ENCODE measurements at regions of chr12 and their contacts with region 1.

Region 1: GRCh38 chr12:51521554-51522276 is 69.3 kb upstream of the SCN8A start:
- DNase-seq: no peak
- H3K4me3 ChIP-seq: no peak overlapping the region
- H3K27ac ChIP-seq: no peak overlapping the region
- H3K4me1 ChIP-seq: peaks cover 0 to 26% of the 10 kb centered on the region in 2 experiments; a peak in 2 of 4 replicates
- H3K27me3 ChIP-seq: no peaks in the 10 kb centered on the region
- CTCF ChIP-seq: peak; percentile 36; the same call in 1 of the 2 replicates
- EP300 ChIP-seq: no peak
- RAD21 ChIP-seq: no peak

Region 2: GRCh38 chr12:51381226-51382079 is 140.3 kb before region 1 on chr12:
- CTCF ChIA-PET with region 1: no interaction called
- POLR2A ChIA-PET with region 1: no interaction called
- DNase-seq: no peak
- H3K4me3 ChIP-seq: no peak overlapping the region
- H3K27ac ChIP-seq: no peak overlapping the region; a peak in 1 of 4 replicates
- H3K4me1 ChIP-seq: peaks cover 0 to 21% of the 10 kb centered on the region in 2 experiments; a peak in 2 of 4 replicates
- H3K27me3 ChIP-seq: no peaks in the 10 kb centered on the region
- CTCF ChIP-seq: no peak
- EP300 ChIP-seq: no peak
- RAD21 ChIP-seq: no peak

Region 3: DNA sequence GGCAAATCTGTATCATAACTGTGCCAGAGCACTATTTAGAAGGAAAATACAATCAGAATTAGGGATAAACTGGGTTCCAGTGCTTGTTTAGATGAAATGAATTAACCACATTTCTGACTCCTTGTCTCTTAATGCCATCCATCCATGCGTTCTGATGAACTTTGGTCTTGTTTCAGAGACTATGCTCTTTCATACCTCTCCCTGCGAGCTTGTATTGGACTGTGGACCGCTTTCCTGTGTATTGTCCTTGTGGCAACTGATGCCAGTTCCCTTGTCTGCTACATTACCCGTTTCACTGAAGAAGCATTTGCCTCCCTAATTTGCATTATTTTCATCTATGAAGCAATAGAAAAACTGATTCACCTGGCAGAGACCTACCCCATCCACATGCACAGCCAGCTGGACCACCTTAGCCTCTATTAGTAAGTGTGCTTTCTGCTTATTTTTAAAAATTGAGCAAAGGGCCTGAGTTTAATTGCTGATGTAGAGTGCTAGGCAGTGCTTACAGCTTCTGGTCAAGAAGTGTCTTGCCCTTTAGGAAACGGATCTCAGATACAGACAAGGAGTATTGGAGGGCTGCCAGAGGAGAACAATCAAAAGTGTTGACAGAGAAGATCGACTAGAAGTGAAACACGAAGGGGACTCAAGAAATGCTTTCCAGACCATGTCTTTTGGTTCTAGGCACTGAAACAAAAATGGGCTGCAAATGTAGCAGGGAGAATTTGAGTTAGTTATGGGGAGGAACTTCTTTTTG is 50.4 kb before region 1 on chr12:
- CTCF ChIA-PET with region 1: no interaction called
- POLR2A ChIA-PET with region 1: no interaction called
- DNase-seq: no peak
- H3K4me3 ChIP-seq: no peak overlapping the region
- H3K27ac ChIP-seq: no peak overlapping the region
- H3K4me1 ChIP-seq: no peaks in the 10 kb centered on the region
- H3K27me3 ChIP-seq: no peaks in the 10 kb centered on the region
- CTCF ChIP-seq: no peak
- EP300 ChIP-seq: no peak
- RAD21 ChIP-seq: no peak

Region 4: DNA sequence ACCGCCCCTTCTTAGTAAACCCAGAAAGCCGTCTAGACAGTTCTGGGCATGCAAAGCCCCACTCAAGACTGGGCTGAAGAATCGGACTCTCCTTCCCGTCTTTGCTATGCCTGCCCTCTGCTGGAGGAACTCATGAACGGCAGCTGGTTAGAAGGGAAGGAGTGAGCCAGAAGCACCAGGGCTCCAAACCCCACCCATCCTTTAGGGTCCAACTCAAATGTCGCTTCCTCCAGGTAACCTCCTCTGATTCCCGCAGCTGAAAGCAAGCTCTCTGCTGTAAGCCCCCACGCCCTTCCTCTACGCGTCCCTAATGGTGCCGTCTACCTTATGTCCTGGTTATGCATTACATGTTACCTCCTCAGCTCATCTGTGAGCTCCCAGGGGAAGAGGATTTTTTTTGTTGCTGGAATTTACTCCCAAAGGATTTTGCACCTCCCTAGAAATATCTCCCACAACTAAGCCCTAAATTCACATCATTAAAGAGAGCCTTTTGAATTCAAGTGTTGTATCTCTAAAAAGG is 10.3 kb after region 1 on chr12:
- CTCF ChIA-PET with region 1: interaction called, 48 read pairs
- POLR2A ChIA-PET with region 1: no interaction called
- DNase-seq: peak; percentile 80
- H3K4me3 ChIP-seq: no peak overlapping the region
- H3K27ac ChIP-seq: no peak overlapping the region
- H3K4me1 ChIP-seq: peaks cover 6 to 27% of the 10 kb centered on the region in 2 experiments; a peak in 2 of 4 replicates
- H3K27me3 ChIP-seq: no peaks in the 10 kb centered on the region
- CTCF ChIP-seq: peak; percentile 83
- EP300 ChIP-seq: no peak
- RAD21 ChIP-seq: peak; percentile 95

Region 5: DNA sequence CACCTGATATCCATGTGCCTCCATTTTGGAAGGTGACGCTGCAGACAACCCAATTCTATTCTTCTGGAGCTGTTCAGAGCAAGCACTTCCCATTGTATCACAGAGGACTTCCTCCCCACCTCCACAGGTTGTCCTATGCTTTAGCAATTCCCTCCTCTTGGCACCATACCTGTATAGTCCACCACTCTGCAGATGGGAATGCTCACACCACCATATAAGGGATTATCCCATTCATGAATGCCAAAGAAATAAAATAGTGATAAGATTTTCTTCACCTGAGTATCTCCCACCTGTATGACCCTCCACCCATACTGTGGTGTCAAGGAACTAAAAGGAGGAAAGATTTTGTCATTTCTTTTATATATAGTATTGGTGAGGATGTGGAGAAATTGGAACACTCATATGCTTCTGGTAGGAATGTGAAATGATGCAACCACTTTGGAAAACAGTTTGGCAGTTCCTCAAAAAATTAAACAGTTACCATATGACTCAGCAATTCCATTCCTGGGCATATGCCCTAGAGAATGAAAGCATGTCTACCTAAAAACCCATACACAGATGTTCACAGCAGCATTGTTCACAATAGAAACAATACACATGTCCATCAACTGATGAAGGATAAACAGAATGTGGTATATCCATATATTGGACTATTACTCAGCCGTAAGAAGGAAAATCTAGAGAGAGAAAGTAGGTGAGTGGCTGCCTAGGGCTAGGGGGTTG is 251.6 kb after region 1 on chr12:
- CTCF ChIA-PET with region 1: no interaction called
- POLR2A ChIA-PET with region 1: no interaction called
- DNase-seq: no peak
- H3K4me3 ChIP-seq: no peak overlapping the region
- H3K27ac ChIP-seq: peak overlapping the region in 1 of 2 experiments; percentile 30; a peak in 2 of 4 replicates
- H3K4me1 ChIP-seq: no peaks in the 10 kb centered on the region
- H3K27me3 ChIP-seq: no peaks in the 10 kb centered on the region
- CTCF ChIP-seq: no peak
- EP300 ChIP-seq: peak in 1 of 2 experiments; percentile 39; a peak in 1 of 4 replicates
- RAD21 ChIP-seq: no peak

Region 6: DNA sequence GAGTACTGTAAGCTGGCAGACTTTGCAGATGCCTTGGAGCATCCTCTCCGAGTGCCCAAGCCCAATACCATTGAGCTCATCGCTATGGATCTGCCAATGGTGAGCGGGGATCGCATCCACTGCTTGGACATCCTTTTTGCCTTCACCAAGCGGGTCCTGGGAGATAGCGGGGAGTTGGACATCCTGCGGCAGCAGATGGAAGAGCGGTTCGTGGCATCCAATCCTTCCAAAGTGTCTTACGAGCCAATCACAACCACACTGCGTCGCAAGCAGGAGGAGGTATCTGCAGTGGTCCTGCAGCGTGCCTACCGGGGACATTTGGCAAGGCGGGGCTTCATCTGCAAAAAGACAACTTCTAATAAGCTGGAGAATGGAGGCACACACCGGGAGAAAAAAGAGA is 285.2 kb after region 1 on chr12:
- CTCF ChIA-PET with region 1: no interaction called
- POLR2A ChIA-PET with region 1: no interaction called
- DNase-seq: no peak
- H3K4me3 ChIP-seq: no peak overlapping the region
- H3K27ac ChIP-seq: no peak overlapping the region
- H3K4me1 ChIP-seq: no peaks in the 10 kb centered on the region
- H3K27me3 ChIP-seq: no peaks in the 10 kb centered on the region
- CTCF ChIP-seq: no peak
- EP300 ChIP-seq: no peak
- RAD21 ChIP-seq: no peak

Measured in SK-N-SH (cell line).